ENCODE measurements at regions of chr3 and their contacts with region 1.

Region 1: GRCh38 chr3:38479431-38480092 is 16.6 kb upstream of the EXOG start:
- DNase-seq: peak; percentile 59 to 65
- H3K4me3 ChIP-seq: no peak overlapping the region
- H3K27ac ChIP-seq: no peak overlapping the region
- H3K4me1 ChIP-seq: no peaks in the 10 kb centered on the region
- H3K27me3 ChIP-seq: no peaks in the 10 kb centered on the region
- CTCF ChIP-seq: peak; percentile 77 to 86 (median 84)
- POLR2A ChIP-seq: no peak

Region 2: DNA sequence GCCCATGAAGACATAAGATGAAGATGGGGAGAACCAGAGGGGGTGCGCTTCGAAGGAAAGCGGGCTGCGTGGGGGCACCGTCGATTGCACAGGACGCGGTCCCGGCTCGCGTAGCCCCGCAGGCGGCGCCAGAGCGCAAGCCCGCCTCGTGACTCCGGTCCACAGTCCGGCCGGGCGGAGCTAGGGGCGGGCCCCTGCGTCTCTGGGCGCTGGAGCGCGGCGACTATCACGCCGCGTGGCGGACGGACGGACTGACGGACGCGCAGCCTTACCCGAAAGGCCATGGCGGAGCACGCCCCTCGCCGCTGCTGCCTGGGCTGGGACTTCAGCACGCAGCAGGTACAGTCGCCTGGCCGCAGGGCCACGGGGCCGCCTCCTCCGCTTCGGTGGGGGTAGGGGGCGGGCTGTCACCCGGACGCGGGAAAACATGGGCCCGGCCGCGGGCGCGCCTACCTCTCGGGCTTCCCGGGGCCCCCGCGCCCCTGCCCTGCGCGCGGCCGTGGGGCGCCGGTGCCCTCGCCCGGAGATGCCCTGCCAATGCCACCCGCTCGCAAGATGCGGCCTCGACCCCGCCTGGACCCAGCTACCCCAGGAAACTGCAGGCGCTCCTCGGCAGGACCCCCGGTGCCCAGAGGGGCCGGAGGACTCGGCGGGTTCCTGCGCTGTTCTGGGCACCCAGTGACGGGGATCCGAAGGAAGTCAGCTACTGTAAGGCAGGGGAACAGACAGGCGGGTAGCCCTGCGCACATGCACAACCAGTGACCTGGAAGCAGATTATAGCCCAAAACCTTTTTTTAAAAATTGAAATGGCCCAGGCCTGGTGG is 132.8 kb before region 1 on chr3 and contains the start of gene XYLB:
- intact Hi-C with region 1: loop called (anchors 5 kb)
- DNase-seq: peak; percentile 74 to 84
- H3K4me3 ChIP-seq: peak within 1 kb of the TSS; percentile 72 to 77
- H3K27ac ChIP-seq: peak within 1 kb of the TSS; percentile 32 to 36
- H3K4me1 ChIP-seq: peaks cover 0 to 8% of the 10 kb centered on the region in 2 donors
- H3K27me3 ChIP-seq: no peaks in the 10 kb centered on the region
- CTCF ChIP-seq: peak; percentile 87 to 95 (median 93)
- POLR2A ChIP-seq: peak in 1 of 2 donors; percentile 40
- total RNA-seq, gene XYLB: 0.26 to 12.7 (median 6.5) TPM

Region 3: GRCh38 chr3:38468782-38469181 is 10.8 kb before region 1 on chr3:
- intact Hi-C with region 1: no loop called
- DNase-seq: no peak
- H3K4me3 ChIP-seq: no peak overlapping the region
- H3K27ac ChIP-seq: no peak overlapping the region
- H3K4me1 ChIP-seq: no peaks in the 10 kb centered on the region
- H3K27me3 ChIP-seq: no peaks in the 10 kb centered on the region
- CTCF ChIP-seq: no peak
- POLR2A ChIP-seq: no peak

Measured in uterus (tissue), 4 donors.